ENCODE measurements at regions of chr9 and their contacts with region 1.

Region 1: GRCh38 chr9:14428781-14429230 is 114.9 kb upstream of the NFIB start:
- DNase-seq: peak; percentile 60 to 84 (median 73)
- H3K4me3 ChIP-seq: peak overlapping the region in 11 of 59 donors; percentile 7 to 38 (median 22)
- H3K27ac ChIP-seq: peak overlapping the region in 2 of 59 donors; percentile 29 to 50
- H3K27me3 ChIP-seq: no peaks in the 10 kb centered on the region
- CTCF ChIP-seq: peak; percentile 72 to 92 (median 84)

Region 2: GRCh38 chr9:13033959-13034693 is 1394.7 kb before region 1 on chr9:
- intact Hi-C with region 1: loop called (anchors 5 to 10 kb)
- DNase-seq: peak; percentile 61 to 80 (median 68)
- H3K4me3 ChIP-seq: peak overlapping the region in 53 of 59 donors; percentile 5 to 54 (median 36)
- H3K27ac ChIP-seq: peak overlapping the region in 3 of 59 donors; percentile 7 to 36 (median 30)
- H3K27me3 ChIP-seq: no peaks in the 10 kb centered on the region
- CTCF ChIP-seq: peak; percentile 45 to 89 (median 79)

Region 3: GRCh38 chr9:13213337-13213736 is 1215.5 kb before region 1 on chr9:
- intact Hi-C with region 1: loop called (anchors 10 kb)
- DNase-seq: no peak
- H3K4me3 ChIP-seq: no peak overlapping the region
- H3K27ac ChIP-seq: no peak overlapping the region
- H3K27me3 ChIP-seq: no peaks in the 10 kb centered on the region
- CTCF ChIP-seq: peak in 54 of 56 donors; percentile 15 to 74 (median 44)

Region 4: DNA sequence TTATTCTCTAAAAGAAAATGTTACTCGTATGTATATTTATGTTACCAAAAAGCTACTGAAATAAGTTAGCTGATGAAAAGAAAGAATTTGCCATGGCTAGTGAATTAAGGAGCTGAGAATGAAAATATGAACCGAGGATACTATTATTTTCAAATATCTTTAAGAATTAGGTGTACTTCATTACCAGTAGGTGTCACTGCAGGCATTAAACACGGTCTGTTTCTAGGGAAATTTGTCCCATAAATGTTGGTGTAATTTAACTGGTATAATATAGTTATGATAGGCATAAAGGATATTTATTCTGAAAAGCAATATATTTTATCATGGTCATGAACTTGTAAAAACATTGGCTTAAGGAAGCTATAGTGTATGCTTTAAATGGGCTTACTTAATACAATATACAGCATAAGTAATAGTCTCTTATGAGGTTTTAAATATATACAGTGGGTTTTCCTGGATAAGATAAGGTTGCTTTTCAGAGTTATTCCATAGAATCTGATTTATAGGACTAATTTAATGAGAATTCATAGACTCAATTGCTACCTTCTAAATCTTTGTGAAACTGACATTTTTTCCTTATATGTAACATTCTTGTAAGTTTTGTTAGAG is 1076.9 kb before region 1 on chr9:
- intact Hi-C with region 1: loop called (anchors 5 to 10 kb)
- DNase-seq: no peak
- H3K4me3 ChIP-seq: no peak overlapping the region
- H3K27ac ChIP-seq: no peak overlapping the region
- H3K27me3 ChIP-seq: no peaks in the 10 kb centered on the region
- CTCF ChIP-seq: peak; percentile 48 to 86 (median 66)

Measured in dorsolateral prefrontal cortex (tissue), 120 donors.